MCF 10A (cell line): ENCODE measurements at regions of chr10 and their contacts with region 1.

Region 1: GRCh38 chr10:28179006-28179742 is 123.7 kb downstream of the MPP7 start:
- DNase-seq: peak; percentile 72
- H3K4me3 Mint-ChIP-seq: peak overlapping the region; percentile 50
- H3K27ac Mint-ChIP-seq: peak overlapping the region; percentile 73
- H3K4me1 Mint-ChIP-seq: peaks cover 17% of the 10 kb centered on the region
- H3K27me3 Mint-ChIP-seq: no peaks in the 10 kb centered on the region
- CTCF ChIP-seq: peak; percentile 64

Region 2: GRCh38 chr10:27369880-27370279 is 809.3 kb before region 1 on chr10:
- CTCF ChIA-PET with region 1: interaction called, 5 read pairs
- POLR2A ChIA-PET with region 1: no interaction called
- intact Hi-C with region 1: loop called (anchors 1 kb)
- DNase-seq: peak; percentile 24
- H3K4me3 Mint-ChIP-seq: no peak overlapping the region
- H3K27ac Mint-ChIP-seq: no peak overlapping the region
- H3K4me1 Mint-ChIP-seq: peaks cover 22% of the 10 kb centered on the region
- H3K27me3 Mint-ChIP-seq: no peaks in the 10 kb centered on the region
- CTCF ChIP-seq: peak; percentile 40

Region 3: GRCh38 chr10:27558612-27559020 is 620.6 kb before region 1 on chr10:
- CTCF ChIA-PET with region 1: interaction called, 3 read pairs
- POLR2A ChIA-PET with region 1: no interaction called
- intact Hi-C with region 1: loop called (anchors 1 kb)
- DNase-seq: peak; percentile 81
- H3K4me3 Mint-ChIP-seq: no peak overlapping the region
- H3K27ac Mint-ChIP-seq: no peak overlapping the region
- H3K4me1 Mint-ChIP-seq: no peaks in the 10 kb centered on the region
- H3K27me3 Mint-ChIP-seq: no peaks in the 10 kb centered on the region
- CTCF ChIP-seq: peak; percentile 91

Region 4: GRCh38 chr10:27742195-27743011 is 436.8 kb before region 1 on chr10:
- CTCF ChIA-PET with region 1: interaction called, 4 read pairs
- POLR2A ChIA-PET with region 1: interaction called, 3 read pairs
- intact Hi-C with region 1: loop called (anchors 1 kb)
- DNase-seq: peak; percentile 69
- H3K4me3 Mint-ChIP-seq: peak overlapping the region; percentile 54
- H3K27ac Mint-ChIP-seq: no peak overlapping the region
- H3K4me1 Mint-ChIP-seq: no peaks in the 10 kb centered on the region
- H3K27me3 Mint-ChIP-seq: no peaks in the 10 kb centered on the region
- CTCF ChIP-seq: peak; percentile 52

Region 5: GRCh38 chr10:27783660-27784059 is 395.5 kb before region 1 on chr10:
- CTCF ChIA-PET with region 1: no interaction called
- POLR2A ChIA-PET with region 1: no interaction called
- intact Hi-C with region 1: loop called (anchors 1 kb)
- DNase-seq: peak; percentile 64
- H3K4me3 Mint-ChIP-seq: no peak overlapping the region
- H3K27ac Mint-ChIP-seq: no peak overlapping the region
- H3K4me1 Mint-ChIP-seq: no peaks in the 10 kb centered on the region
- H3K27me3 Mint-ChIP-seq: no peaks in the 10 kb centered on the region
- CTCF ChIP-seq: peak; percentile 29

Region 6: GRCh38 chr10:28241741-28242399 is 62.7 kb after region 1 on chr10:
- CTCF ChIA-PET with region 1: interaction called, 4 read pairs
- POLR2A ChIA-PET with region 1: no interaction called
- intact Hi-C with region 1: loop called (anchors 2 kb)
- DNase-seq: peak; percentile 64
- H3K4me3 Mint-ChIP-seq: no peak overlapping the region
- H3K27ac Mint-ChIP-seq: no peak overlapping the region
- H3K4me1 Mint-ChIP-seq: peaks cover 5% of the 10 kb centered on the region
- H3K27me3 Mint-ChIP-seq: no peaks in the 10 kb centered on the region
- CTCF ChIP-seq: peak; percentile 75